A673 (cell line): ENCODE measurements at regions of chr1 and their contacts with region 1.

Region 1: GRCh38 chr1:86507935-86508582 is 38.8 kb upstream of the CLCA4 start:
- DNase-seq: peak; percentile 57
- H3K4me3 ChIP-seq: no peak overlapping the region
- H3K27ac ChIP-seq: no peak overlapping the region
- H3K4me1 ChIP-seq: no peaks in the 10 kb centered on the region
- H3K27me3 ChIP-seq: no peaks in the 10 kb centered on the region
- CTCF ChIP-seq: peak; percentile 66

Region 2: GRCh38 chr1:86380257-86380861 is 127.7 kb before region 1 on chr1:
- CTCF ChIA-PET with region 1: no interaction called
- POLR2A ChIA-PET with region 1: no interaction called
- intact Hi-C with region 1: loop called (anchors 2 kb)
- DNase-seq: peak; percentile 73
- H3K4me3 ChIP-seq: no peak overlapping the region
- H3K27ac ChIP-seq: no peak overlapping the region
- H3K4me1 ChIP-seq: no peaks in the 10 kb centered on the region
- H3K27me3 ChIP-seq: no peaks in the 10 kb centered on the region
- CTCF ChIP-seq: peak; percentile 76

Region 3: DNA sequence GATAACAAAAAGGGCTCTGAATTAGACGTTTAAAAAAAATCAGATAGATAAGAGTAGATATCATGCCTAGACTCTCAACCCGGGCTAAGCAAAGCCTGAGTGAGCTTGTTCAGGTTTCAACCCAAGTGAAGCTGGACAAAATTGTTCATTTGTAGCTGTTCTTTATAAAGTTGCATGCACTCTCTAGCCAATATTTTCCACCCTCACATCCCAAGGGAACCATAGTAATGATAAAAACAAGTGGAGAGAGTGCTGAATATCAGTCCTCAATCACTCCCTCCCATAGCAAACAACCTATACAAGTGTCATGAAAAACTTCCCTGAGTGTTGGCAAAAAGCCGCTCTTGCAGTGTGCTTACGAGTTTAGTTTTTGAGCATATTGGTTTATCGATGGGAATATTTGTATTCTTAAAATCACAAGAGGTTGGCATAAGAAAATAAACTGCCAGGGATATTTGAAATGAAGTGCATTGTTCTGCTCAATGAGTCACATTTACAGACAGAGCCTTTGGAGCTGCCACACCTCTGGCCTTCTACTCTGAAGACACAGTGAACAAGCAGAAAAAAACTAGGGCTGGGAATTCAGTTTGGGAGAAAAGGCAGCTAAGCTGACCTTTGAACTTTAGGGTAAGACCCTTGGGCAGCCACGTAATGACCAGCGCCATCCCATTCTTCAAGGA is 86.3 kb before region 1 on chr1:
- CTCF ChIA-PET with region 1: no interaction called
- POLR2A ChIA-PET with region 1: no interaction called
- intact Hi-C with region 1: loop called (anchors 5 kb)
- DNase-seq: no peak
- H3K4me3 ChIP-seq: no peak overlapping the region
- H3K27ac ChIP-seq: no peak overlapping the region
- H3K4me1 ChIP-seq: no peaks in the 10 kb centered on the region
- H3K27me3 ChIP-seq: no peaks in the 10 kb centered on the region
- CTCF ChIP-seq: no peak

Region 4: DNA sequence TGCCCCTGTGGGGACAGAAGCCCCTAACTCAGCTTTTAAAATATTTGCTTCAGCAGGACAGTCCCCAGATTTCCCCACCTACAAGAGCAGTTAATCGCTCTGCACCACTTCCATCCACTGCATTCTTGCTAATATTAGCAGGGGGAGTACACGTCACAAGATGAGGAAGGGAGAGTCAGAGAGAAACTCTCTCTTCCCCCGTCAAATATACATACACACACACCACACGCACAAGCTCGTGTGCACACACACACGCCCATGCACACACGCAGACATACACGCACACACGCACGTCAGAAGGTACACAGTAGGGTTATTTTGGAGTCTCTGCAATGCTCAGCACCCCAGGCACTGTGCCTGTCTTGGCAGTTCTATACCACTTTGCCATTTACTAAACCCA is 37.2 kb before region 1 on chr1:
- CTCF ChIA-PET with region 1: interaction called, 6 read pairs
- POLR2A ChIA-PET with region 1: no interaction called
- intact Hi-C with region 1: loop called (anchors 5 kb)
- DNase-seq: no peak
- H3K4me3 ChIP-seq: no peak overlapping the region
- H3K27ac ChIP-seq: no peak overlapping the region
- H3K4me1 ChIP-seq: no peaks in the 10 kb centered on the region
- H3K27me3 ChIP-seq: no peaks in the 10 kb centered on the region
- CTCF ChIP-seq: no peak